IMR-90 (cell line): ENCODE measurements at regions of chr14 and their contacts with region 1.

Region 1: DNA sequence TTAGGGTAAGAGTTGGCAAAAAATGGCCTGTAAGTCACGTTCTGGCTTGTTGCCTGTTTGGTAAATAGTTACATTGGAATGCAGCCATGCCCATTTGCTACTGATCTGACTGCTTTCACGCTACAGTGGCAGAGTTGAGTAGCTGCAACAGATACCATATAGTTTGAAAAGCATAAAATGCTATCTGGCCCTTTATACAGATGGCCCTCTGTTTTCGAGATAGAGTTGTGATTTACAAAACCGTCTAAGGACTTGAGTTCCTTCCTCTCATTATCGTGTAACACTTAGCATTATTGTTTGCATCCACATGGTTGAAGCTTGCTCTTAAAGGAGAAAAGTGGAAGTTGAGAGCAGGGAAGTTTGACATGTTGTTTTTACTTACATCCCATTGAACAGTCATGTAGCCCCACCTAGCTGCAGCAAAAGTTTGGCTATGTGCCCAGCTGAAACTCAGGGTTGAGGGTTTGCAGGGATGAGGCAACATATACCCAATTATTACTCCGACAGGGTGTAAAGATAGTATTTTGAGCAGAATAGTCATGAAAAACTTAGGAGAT is 11.3 kb upstream of the SCFD1 start:
- DNase-seq: peak; percentile 81
- ATAC-seq: peak; percentile 56
- H3K4me3 ChIP-seq: no peak overlapping the region
- H3K27ac ChIP-seq: no peak overlapping the region
- H3K4me1 ChIP-seq: no peaks in the 10 kb centered on the region
- H3K27me3 ChIP-seq: no peaks in the 10 kb centered on the region
- CTCF ChIP-seq: peak; percentile 53
- POLR2A ChIP-seq: no peak
- RAD21 ChIP-seq: peak; percentile 66

Region 2: GRCh38 chr14:29892327-29892726 is 718.5 kb before region 1 on chr14:
- CTCF ChIA-PET with region 1: no interaction called
- POLR2A ChIA-PET with region 1: no interaction called
- dilution Hi-C with region 1: no loop called
- in situ Hi-C with region 1: no loop called
- intact Hi-C with region 1: no loop called
- DNase-seq: peak; percentile 13
- ATAC-seq: no peak
- H3K4me3 ChIP-seq: no peak overlapping the region
- H3K27ac ChIP-seq: no peak overlapping the region
- H3K4me1 ChIP-seq: peaks cover 4% of the 10 kb centered on the region; the same call in 1 of the 2 replicates
- H3K27me3 ChIP-seq: no peaks in the 10 kb centered on the region
- CTCF ChIP-seq: no peak
- POLR2A ChIP-seq: no peak
- RAD21 ChIP-seq: no peak

Region 3: DNA sequence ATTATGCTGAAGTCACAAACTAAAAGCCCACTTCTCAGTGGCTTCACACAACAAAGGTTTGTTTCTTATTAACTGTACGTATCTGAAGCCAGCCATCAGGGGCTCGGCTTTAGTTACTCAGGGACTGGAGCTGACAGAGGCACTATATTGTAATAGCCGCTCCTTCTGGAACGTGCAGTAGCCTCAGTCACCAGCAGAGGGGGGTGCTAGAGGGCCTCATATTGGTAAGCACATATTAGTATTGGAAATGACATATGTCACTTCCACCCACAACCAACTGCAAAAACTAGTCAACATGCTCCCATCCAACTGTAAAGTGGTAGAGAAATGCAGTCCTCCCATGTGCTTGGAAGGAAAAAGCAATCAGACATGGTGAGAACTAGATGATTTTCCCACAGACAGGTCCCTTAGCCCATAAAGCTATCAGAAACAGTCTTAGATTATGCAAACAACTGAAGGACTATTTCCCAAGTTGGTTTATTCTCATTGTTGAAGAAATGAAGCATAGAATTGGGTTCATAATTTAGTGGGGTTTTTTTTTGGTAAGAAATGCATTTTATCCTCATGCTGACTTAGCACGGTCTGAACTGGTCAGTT is 235.5 kb before region 1 on chr14:
- CTCF ChIA-PET with region 1: interaction called, 3 read pairs
- POLR2A ChIA-PET with region 1: no interaction called
- dilution Hi-C with region 1: no loop called
- in situ Hi-C with region 1: loop called (anchors 10 kb)
- intact Hi-C with region 1: loop called (anchors 2 kb)
- DNase-seq: peak; percentile 47
- ATAC-seq: peak; percentile 97
- H3K4me3 ChIP-seq: no peak overlapping the region
- H3K27ac ChIP-seq: no peak overlapping the region
- H3K4me1 ChIP-seq: no peaks in the 10 kb centered on the region
- H3K27me3 ChIP-seq: no peaks in the 10 kb centered on the region; the same call in 1 of the 2 replicates
- CTCF ChIP-seq: peak; percentile 71
- POLR2A ChIP-seq: no peak
- RAD21 ChIP-seq: peak; percentile 58

Region 4: GRCh38 chr14:30521899-30522736 is 88.7 kb before region 1 on chr14:
- CTCF ChIA-PET with region 1: interaction called, 3 read pairs
- POLR2A ChIA-PET with region 1: interaction called, 3 read pairs
- dilution Hi-C with region 1: no loop called
- in situ Hi-C with region 1: no loop called
- intact Hi-C with region 1: loop called (anchors 1 kb)
- DNase-seq: peak; percentile 51
- ATAC-seq: peak; percentile 85
- H3K4me3 ChIP-seq: no peak overlapping the region
- H3K27ac ChIP-seq: no peak overlapping the region
- H3K4me1 ChIP-seq: no peaks in the 10 kb centered on the region
- H3K27me3 ChIP-seq: no peaks in the 10 kb centered on the region; the same call in 1 of the 2 replicates
- CTCF ChIP-seq: peak; percentile 64
- POLR2A ChIP-seq: no peak
- RAD21 ChIP-seq: peak; percentile 44

Region 5: DNA sequence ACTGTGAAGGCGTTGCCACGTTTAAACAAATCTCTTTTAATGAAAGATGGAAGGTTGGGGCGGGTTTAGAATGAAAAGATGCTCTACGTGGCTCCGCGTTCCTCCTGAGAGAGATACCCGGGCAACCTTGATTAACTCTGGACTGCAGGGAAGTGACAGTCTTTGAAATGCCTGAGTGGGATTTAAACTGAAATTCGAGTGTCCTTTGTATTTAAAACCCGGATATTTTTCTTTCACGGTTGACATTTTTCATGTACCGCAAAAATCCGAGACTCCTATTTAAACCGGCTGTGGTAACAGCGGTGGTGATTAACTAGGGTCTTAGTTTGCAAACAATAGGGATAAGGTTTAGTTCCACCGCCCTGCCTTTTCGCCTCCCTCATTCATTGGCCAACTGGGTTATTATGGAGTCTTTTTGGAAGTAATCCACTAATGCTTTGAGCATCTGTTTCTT is 51.2 kb before region 1 on chr14:
- CTCF ChIA-PET with region 1: no interaction called
- POLR2A ChIA-PET with region 1: interaction called, 3 read pairs
- dilution Hi-C with region 1: no loop called
- in situ Hi-C with region 1: no loop called
- intact Hi-C with region 1: loop called (anchors 5 kb)
- DNase-seq: peak; percentile 42
- ATAC-seq: peak; percentile 21
- H3K4me3 ChIP-seq: peak overlapping the region; percentile 93
- H3K27ac ChIP-seq: peak overlapping the region; percentile 82
- H3K4me1 ChIP-seq: peaks cover 2% of the 10 kb centered on the region; the same call in 1 of the 2 replicates
- H3K27me3 ChIP-seq: no peaks in the 10 kb centered on the region
- CTCF ChIP-seq: no peak
- POLR2A ChIP-seq: no peak
- RAD21 ChIP-seq: no peak

Region 6: DNA sequence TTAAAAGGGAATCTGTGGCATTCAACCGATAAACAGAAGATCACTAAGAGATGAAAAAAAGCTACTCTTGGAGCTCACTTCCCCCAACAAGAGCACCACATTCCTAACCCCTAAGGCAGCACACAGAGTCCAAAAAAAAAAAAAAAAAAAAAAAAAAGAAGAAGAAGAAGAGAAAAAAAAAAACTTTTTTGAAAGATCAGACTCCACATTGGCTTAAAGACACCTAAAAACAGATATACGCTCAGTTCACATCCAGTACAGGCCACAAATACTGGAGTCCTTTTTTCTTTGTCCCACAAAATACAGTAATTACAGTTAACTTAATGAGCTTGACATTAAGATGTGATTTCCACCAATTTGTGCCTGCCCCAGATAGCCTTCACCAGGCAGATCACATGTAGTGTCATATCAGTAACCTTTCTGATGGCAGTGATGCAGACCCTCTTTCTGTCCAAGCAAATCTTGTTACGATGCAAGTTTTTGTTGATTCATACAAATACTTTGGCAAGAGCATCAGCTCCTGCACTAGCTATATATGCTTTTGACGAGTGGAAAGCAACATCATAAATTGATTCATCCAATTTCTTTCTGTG is 284.2 kb after region 1 on chr14:
- CTCF ChIA-PET with region 1: no interaction called
- POLR2A ChIA-PET with region 1: no interaction called
- dilution Hi-C with region 1: no loop called
- in situ Hi-C with region 1: no loop called
- intact Hi-C with region 1: no loop called
- DNase-seq: no peak
- ATAC-seq: 0 out of 2 replicates have a peak, but pooled peaks have one; percentile 60
- H3K4me3 ChIP-seq: no peak overlapping the region
- H3K27ac ChIP-seq: no peak overlapping the region
- H3K4me1 ChIP-seq: no peaks in the 10 kb centered on the region
- H3K27me3 ChIP-seq: no peaks in the 10 kb centered on the region
- CTCF ChIP-seq: no peak
- POLR2A ChIP-seq: no peak
- RAD21 ChIP-seq: no peak